ENCODE measurements at regions of chr3 and their contacts with region 1.

Region 1: DNA sequence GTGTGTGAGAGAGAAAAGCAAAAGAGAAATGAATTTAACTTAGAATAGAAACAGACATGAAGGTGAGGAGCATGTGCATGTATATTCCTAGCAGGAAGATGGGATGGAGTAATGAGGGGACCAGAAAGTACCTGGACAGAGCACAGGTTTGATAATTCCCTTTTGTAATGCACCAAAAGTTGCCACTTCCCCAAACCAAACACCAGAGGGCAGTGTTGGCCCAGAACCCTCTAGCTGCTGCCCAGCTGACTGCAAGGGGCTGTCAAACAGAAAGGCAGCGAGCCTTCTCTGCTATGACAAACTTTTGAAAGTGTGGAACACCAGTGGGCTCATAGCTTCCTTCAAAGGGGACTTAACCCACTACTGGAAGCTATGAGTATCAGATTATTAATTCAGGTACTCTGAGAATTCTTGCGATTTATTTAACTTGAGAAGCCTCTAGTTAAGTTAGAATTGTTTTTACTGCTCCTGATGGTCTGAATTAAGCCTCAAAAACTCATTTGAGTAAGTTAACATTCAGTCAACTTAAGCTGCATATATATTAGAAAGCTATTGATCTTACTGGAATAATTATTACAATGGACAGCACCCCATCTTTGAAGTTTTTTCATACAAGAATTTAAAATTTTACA is 234.9 kb downstream of the NEK10 start:
- DNase-seq: peak; percentile 75
- ATAC-seq: peak; percentile 60
- H3K4me3 Mint-ChIP-seq: no peak overlapping the region
- H3K27ac Mint-ChIP-seq: no peak overlapping the region
- H3K4me1 Mint-ChIP-seq: no peaks in the 10 kb centered on the region
- H3K27me3 Mint-ChIP-seq: peaks cover 2% of the 10 kb centered on the region

Region 2: GRCh38 chr3:26862953-26863352 is 271.3 kb before region 1 on chr3:
- CTCF ChIA-PET with region 1: no interaction called
- POLR2A ChIA-PET with region 1: no interaction called
- intact Hi-C with region 1: no loop called
- DNase-seq: no peak
- ATAC-seq: no peak
- H3K4me3 Mint-ChIP-seq: no peak overlapping the region
- H3K27ac Mint-ChIP-seq: no peak overlapping the region
- H3K4me1 Mint-ChIP-seq: no peaks in the 10 kb centered on the region
- H3K27me3 Mint-ChIP-seq: no peaks in the 10 kb centered on the region

Region 3: GRCh38 chr3:27253831-27254230 is 119.5 kb after region 1 on chr3:
- CTCF ChIA-PET with region 1: interaction called, 23 read pairs
- POLR2A ChIA-PET with region 1: no interaction called
- intact Hi-C with region 1: loop called (anchors 1 to 2 kb)
- DNase-seq: peak; percentile 46
- ATAC-seq: peak; percentile 68
- H3K4me3 Mint-ChIP-seq: no peak overlapping the region
- H3K27ac Mint-ChIP-seq: no peak overlapping the region
- H3K4me1 Mint-ChIP-seq: no peaks in the 10 kb centered on the region
- H3K27me3 Mint-ChIP-seq: peaks cover 13% of the 10 kb centered on the region

Region 4: DNA sequence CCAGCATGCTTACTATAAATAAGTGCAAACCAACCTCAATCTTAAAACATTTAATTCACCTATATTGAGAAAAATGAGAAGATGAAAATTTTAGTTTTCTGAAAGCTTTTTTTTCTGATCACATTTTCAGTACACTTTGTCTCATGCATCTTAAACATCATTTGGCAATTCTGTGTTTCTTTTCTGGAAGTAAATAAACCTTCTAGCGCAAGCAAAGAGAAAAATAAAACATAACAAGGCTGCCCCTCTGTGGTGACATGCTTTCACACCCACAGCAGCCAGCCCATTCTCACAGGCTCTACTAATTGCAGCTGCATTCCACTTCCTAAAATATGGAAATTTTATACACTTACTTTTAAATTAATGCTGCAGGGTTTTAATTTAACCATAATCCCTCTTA is 144.8 kb after region 1 on chr3:
- CTCF ChIA-PET with region 1: interaction called, 3 read pairs
- POLR2A ChIA-PET with region 1: no interaction called
- intact Hi-C with region 1: loop called in 1 of 2 experiments (anchors 1 kb)
- DNase-seq: no peak
- ATAC-seq: no peak
- H3K4me3 Mint-ChIP-seq: no peak overlapping the region
- H3K27ac Mint-ChIP-seq: no peak overlapping the region
- H3K4me1 Mint-ChIP-seq: no peaks in the 10 kb centered on the region
- H3K27me3 Mint-ChIP-seq: no peaks in the 10 kb centered on the region

Region 5: GRCh38 chr3:27681245-27681748 is 547.0 kb after region 1 on chr3:
- CTCF ChIA-PET with region 1: interaction called, 4 read pairs
- POLR2A ChIA-PET with region 1: no interaction called
- intact Hi-C with region 1: loop called (anchors 1 to 5 kb)
- DNase-seq: peak; percentile 49
- ATAC-seq: peak; percentile 84
- H3K4me3 Mint-ChIP-seq: peak overlapping the region; percentile 44
- H3K27ac Mint-ChIP-seq: peak overlapping the region; percentile 80
- H3K4me1 Mint-ChIP-seq: peaks cover 8% of the 10 kb centered on the region
- H3K27me3 Mint-ChIP-seq: no peaks in the 10 kb centered on the region

Measured in activated CD4-positive, alpha-beta T cell treated with anti-CD3 and anti-CD28 coated beads for 36 hours (primary cell).